Activated T-helper 1 cell treated with anti-CD3 and anti-CD28 coated beads, Interleukin-12 subunit alpha, Interleukin-12 subunit beta, Interleukin-2, Interleukin-4 antibody, amounts not matched to agents 30 ng/mL and 10 ng/mL and 1 ng/mL, durations not matched to agents 14 hours and 24 hours and 36 hours (primary cell): ENCODE measurements at regions of chr16 and their contacts with region 1.

Region 1: GRCh38 chr16:2777231-2777902 is at the start of gene ELOB:
- DNase-seq: peak; percentile 87
- H3K4me3 Mint-ChIP-seq: peak within 1 kb of the TSS; percentile 93
- H3K27ac Mint-ChIP-seq: peak within 1 kb of the TSS; percentile 94
- H3K4me1 Mint-ChIP-seq: peaks cover 27% of the 10 kb centered on the region
- H3K27me3 Mint-ChIP-seq: no peaks in the 10 kb centered on the region
- total RNA-seq, gene ELOB: 256 and 277 TPM in 2 replicates

Region 2: GRCh38 chr16:2752850-2753732 is 24.3 kb before region 1 on chr16:
- intact Hi-C with region 1: loop called (anchors 1 kb)
- DNase-seq: no peak
- H3K4me3 Mint-ChIP-seq: peak overlapping the region; percentile 89
- H3K27ac Mint-ChIP-seq: peak overlapping the region; percentile 79
- H3K4me1 Mint-ChIP-seq: peaks cover 57% of the 10 kb centered on the region
- H3K27me3 Mint-ChIP-seq: no peaks in the 10 kb centered on the region

Region 3: DNA sequence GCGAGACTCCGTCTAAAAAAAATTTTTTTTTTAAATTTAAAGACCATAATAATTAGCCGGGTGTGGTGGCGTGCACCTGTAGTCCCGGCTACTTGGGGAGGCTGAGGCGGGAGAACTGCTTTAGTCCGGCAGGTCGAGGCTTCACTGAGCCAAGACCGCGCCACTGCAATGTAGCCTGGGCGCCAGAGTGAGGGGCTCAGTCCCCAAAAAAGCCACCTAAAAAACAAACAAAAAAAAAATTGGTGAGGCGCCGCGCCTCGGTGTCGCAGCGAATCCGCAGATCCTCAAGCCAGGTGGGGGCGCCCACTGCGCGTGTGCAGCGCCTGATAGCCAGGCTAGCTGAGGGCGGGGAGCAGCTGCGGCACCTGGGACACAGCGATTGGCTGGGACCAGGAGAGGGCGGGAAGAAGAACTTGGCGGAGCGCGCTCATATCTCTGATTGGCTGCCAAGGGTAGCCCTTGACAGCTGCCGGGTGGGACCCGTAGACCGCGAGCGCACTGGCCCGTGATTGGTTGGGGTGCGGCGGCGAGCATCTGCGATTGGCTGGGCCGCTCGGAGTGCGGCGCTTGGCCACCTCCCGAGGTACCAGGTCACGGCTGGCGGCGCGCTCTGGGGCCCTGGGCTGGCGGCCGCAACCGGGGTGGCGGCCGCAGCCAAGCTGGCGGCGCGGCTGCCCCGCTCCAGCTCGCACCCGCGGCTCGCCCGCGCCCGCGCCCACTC is 226.4 kb after region 1 on chr16:
- intact Hi-C with region 1: no loop called
- DNase-seq: peak; percentile 98
- H3K4me3 Mint-ChIP-seq: peak overlapping the region; percentile 74
- H3K27ac Mint-ChIP-seq: peak overlapping the region; percentile 21
- H3K4me1 Mint-ChIP-seq: peaks cover 22% of the 10 kb centered on the region
- H3K27me3 Mint-ChIP-seq: peaks cover 18% of the 10 kb centered on the region